A673 (cell line): ENCODE measurements at regions of chr5 and their contacts with region 1.

Region 1: DNA sequence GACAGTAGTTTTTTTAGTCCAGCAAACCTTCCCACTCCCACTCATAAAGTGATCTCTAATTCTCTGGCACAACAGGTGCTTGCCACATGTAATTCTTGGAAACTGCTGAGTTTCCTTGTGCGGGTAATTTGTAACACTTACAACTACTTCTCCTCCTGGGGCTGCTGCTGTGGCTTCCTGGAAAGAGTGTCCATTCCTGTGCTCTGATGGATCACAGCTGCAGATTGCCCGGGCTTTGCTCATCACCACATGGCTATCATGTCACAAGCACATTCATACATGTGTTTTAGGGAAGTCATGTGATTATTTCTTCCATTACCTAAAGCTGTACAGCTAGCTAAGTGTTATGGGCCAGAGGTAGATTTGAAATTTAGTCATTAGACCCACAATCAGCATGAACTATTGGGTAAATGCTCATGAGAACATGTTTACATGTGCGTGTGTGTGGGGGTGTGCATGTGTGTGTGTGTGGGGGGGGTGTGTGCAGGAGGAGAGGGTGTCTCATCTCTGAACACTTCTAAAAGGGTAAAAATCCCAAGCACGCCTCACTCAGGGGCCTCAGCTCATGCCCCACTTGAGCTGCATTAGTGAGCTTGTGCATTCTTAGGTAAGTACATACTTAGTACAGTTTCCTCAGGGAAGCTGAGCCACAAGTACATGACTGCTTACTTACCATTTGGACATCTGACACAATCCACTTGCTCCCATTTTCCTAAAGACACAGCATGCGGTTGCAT is 118.1 kb upstream of the CCDC112 start:
- DNase-seq: no peak
- H3K4me3 ChIP-seq: no peak overlapping the region
- H3K27ac ChIP-seq: no peak overlapping the region
- H3K4me1 ChIP-seq: no peaks in the 10 kb centered on the region
- H3K27me3 ChIP-seq: no peaks in the 10 kb centered on the region
- CTCF ChIP-seq: no peak

Region 2: DNA sequence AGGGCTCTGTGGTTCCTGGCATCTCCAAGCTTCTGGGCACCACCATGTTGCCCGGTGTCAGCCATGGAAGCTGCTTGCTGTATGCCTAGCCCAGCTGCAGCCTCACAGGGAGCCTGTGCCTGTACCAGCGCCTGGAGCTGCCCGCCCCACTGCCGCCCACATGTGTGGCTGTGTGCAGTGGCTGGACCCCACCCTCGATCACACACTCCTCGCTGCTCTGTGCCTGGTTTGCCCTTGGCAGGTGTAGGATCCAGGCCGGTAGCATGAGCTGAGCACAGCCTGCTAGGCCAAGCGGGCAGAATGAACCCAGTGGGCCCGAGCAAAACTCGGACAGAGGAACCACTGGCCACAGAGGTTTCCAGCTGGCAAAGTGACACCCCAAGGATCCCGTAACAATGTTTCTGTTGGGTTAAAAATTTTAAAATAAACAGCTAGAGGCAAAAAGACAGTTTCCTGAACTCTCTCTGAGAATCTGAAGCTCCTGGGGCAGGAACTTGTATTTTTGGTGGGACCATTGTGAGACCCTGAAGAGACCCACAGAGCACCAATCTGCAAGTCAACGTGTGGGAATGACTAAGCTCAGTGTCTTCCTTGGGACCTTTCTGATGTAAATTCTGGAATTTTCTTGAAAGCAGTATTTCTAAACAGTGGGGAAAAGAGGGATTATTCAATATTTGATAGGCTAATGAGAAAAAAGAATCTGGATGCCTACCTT is 45.0 kb before region 1 on chr5:
- CTCF ChIA-PET with region 1: no interaction called
- POLR2A ChIA-PET with region 1: interaction called, 11 read pairs
- intact Hi-C with region 1: no loop called
- DNase-seq: no peak
- H3K4me3 ChIP-seq: no peak overlapping the region
- H3K27ac ChIP-seq: no peak overlapping the region
- H3K4me1 ChIP-seq: no peaks in the 10 kb centered on the region
- H3K27me3 ChIP-seq: no peaks in the 10 kb centered on the region
- CTCF ChIP-seq: no peak

Region 3: GRCh38 chr5:115586601-115587048 is 172.1 kb after region 1 on chr5:
- CTCF ChIA-PET with region 1: no interaction called
- POLR2A ChIA-PET with region 1: no interaction called
- intact Hi-C with region 1: no loop called
- DNase-seq: peak; percentile 50
- H3K4me3 ChIP-seq: no peak overlapping the region
- H3K27ac ChIP-seq: no peak overlapping the region
- H3K4me1 ChIP-seq: no peaks in the 10 kb centered on the region
- H3K27me3 ChIP-seq: no peaks in the 10 kb centered on the region
- CTCF ChIP-seq: peak; percentile 68

Region 4: DNA sequence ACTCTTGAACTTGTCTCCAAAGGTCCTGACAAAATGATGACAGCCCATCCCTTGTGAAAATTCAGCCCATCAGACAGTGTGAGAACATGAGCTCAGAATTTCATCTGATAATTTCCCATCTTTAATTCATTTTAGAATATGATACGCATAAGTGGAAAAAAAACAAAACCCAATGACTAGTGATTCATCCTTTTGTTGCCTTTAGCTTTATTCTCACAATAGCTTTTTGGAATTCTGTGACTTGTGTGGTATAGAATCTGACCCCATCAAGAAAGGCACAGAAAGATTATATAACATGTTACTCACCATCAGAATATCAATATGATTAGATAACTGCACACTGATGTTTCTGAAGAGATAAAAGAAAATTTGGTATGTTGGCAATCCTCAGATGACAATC is 227.4 kb after region 1 on chr5:
- CTCF ChIA-PET with region 1: no interaction called
- POLR2A ChIA-PET with region 1: no interaction called
- intact Hi-C with region 1: no loop called
- DNase-seq: no peak
- H3K4me3 ChIP-seq: no peak overlapping the region
- H3K27ac ChIP-seq: no peak overlapping the region
- H3K4me1 ChIP-seq: peaks cover 7% of the 10 kb centered on the region
- H3K27me3 ChIP-seq: peaks cover 7% of the 10 kb centered on the region
- CTCF ChIP-seq: no peak

Region 5: GRCh38 chr5:116645627-116646026 is 1231.1 kb after region 1 on chr5:
- CTCF ChIA-PET with region 1: no interaction called
- POLR2A ChIA-PET with region 1: no interaction called
- intact Hi-C with region 1: no loop called
- DNase-seq: no peak
- H3K4me3 ChIP-seq: no peak overlapping the region
- H3K27ac ChIP-seq: no peak overlapping the region
- H3K4me1 ChIP-seq: no peaks in the 10 kb centered on the region
- H3K27me3 ChIP-seq: no peaks in the 10 kb centered on the region
- CTCF ChIP-seq: no peak